Adrenal gland (tissue), 19 donors: ENCODE measurements at regions of chr22 and their contacts with region 1.

Region 1: DNA sequence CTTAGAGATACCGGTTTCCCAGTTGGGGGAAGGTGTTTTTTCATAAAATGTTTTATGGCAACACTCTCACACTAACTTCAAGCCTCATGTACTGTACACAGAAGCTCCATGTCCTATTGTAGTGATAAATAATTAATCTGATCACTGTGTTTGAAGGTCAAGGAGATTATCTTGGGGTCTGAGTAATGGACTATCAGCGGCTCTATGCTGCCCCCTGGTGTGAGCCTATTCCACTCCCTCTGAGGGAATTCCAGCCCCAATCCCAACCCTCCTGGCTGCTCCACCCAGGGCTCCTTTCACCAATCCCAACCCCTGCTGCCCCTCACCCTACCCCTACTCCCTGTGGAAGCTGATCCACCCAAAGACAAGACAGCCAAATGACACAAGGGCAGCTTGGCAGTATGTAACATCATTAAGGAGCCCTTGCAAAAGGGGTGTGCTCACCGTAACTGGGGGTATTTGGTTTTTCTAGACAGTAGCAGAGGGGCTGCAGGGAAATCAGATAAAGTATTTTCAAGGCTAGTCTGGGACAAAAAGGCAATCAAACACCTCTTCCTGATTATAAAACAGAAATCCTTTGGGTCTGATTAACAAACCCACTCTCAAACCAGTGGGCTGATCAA is 22.3 kb downstream of the HPS4 start:
- DNase-seq: peak; percentile 57 to 82 (median 77)
- H3K4me3 ChIP-seq: no peak overlapping the region
- H3K27ac ChIP-seq: no peak overlapping the region
- H3K4me1 ChIP-seq: peaks cover 6 to 33% of the 10 kb centered on the region in 2 donors
- H3K27me3 ChIP-seq: no peaks in the 10 kb centered on the region
- CTCF ChIP-seq: peak; percentile 59 to 79 (median 72)
- POLR2A ChIP-seq: no peak

Region 2: GRCh38 chr22:26364066-26365015 is 97.0 kb before region 1 on chr22:
- intact Hi-C with region 1: loop called in 1 of 2 experiments (anchors 2 kb)
- DNase-seq: peak; percentile 58 to 92 (median 79)
- H3K4me3 ChIP-seq: no peak overlapping the region
- H3K27ac ChIP-seq: no peak overlapping the region
- H3K4me1 ChIP-seq: no peaks in the 10 kb centered on the region
- H3K27me3 ChIP-seq: peaks cover 7% of the 10 kb centered on the region
- CTCF ChIP-seq: peak; percentile 47 to 70 (median 58)
- POLR2A ChIP-seq: no peak

Region 3: GRCh38 chr22:26398741-26399153 is 62.6 kb before region 1 on chr22:
- intact Hi-C with region 1: loop called (anchors 5 to 10 kb)
- DNase-seq: peak; percentile 53 to 84 (median 72)
- H3K4me3 ChIP-seq: no peak overlapping the region
- H3K27ac ChIP-seq: no peak overlapping the region
- H3K4me1 ChIP-seq: no peaks in the 10 kb centered on the region
- H3K27me3 ChIP-seq: no peaks in the 10 kb centered on the region
- CTCF ChIP-seq: peak; percentile 33 to 76 (median 72)
- POLR2A ChIP-seq: no peak

Region 4: DNA sequence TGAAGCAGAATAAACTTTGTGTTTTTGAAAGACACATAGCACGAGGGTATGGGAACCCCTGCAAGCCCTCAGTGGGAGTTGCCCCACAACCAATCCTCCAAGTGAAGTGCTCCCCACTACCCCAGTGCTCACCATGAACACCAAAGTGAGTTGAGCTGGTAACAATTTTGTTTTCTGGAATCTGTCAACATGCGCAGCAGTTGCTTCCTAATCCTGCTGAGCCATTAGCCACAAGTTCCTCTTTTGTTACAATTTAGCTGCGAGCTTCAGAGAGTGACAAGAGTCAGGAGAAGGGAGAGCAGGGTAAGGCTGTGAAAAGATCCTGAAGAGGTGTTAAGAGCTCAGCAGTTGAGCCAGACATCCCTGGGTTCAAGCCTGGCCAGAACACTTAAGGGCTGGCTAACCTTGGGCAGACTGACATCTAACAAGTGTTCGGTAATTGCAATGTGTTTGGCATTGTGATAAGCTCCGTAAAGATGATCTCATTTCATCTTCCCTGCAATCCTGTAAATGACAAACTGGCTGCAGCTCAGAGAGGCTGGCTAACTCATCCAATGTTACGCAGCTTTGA is 56.4 kb before region 1 on chr22:
- intact Hi-C with region 1: loop called in 1 of 2 experiments (anchors 5 kb)
- DNase-seq: no peak
- H3K4me3 ChIP-seq: no peak overlapping the region
- H3K27ac ChIP-seq: no peak overlapping the region
- H3K4me1 ChIP-seq: peaks cover 0 to 4% of the 10 kb centered on the region in 2 donors
- H3K27me3 ChIP-seq: no peaks in the 10 kb centered on the region
- CTCF ChIP-seq: no peak
- POLR2A ChIP-seq: no peak

Region 5: DNA sequence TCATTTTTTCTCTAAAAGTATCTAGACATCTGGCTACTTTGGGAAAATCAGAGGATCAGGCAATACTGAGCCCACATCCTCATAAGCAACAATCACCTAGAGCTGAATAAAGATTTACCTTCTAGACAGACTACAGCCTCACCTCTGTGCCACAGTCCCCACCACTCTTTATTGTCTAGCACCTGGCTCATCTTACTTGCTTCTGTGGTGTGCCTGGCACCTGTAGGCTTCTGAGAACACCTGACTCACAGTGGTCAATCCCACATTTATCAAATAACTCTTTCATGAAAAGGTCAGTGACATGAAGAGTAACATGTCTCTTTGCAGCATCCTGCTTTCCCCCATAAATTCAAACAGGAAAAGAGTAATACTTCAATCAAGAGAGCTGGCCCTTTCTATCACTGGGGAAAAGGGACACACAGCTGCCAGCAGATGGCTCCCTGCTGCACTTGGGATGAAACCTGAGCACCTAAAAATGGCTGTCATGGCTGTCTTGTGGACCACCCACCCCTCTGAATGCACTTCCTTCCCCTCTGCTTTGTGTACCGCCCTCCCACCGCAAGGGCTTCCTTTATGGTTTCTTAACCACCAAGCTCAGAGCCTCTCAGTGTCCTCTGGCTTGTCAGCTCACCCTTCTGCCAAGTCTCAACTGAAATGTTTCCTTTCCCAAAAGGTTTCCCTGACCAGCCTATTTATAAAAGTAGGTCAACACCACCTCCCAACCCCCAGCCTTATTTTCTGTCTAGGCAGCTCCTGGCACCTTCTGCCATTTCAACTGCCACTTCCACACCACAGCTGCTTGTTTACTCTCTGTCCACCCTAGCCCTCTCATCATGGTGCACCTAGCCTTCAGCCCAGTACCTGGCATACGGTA is 41.6 kb after region 1 on chr22:
- intact Hi-C with region 1: no loop called
- DNase-seq: peak; percentile 30 to 66 (median 43)
- H3K4me3 ChIP-seq: no peak overlapping the region
- H3K27ac ChIP-seq: no peak overlapping the region
- H3K4me1 ChIP-seq: no peaks in the 10 kb centered on the region
- H3K27me3 ChIP-seq: no peaks in the 10 kb centered on the region
- CTCF ChIP-seq: peak; percentile 15 to 57 (median 47)
- POLR2A ChIP-seq: no peak

Region 6: GRCh38 chr22:26848244-26848920 is 387.1 kb after region 1 on chr22:
- intact Hi-C with region 1: no loop called
- DNase-seq: peak in 1 of 7 donors; percentile 15
- H3K4me3 ChIP-seq: no peak overlapping the region
- H3K27ac ChIP-seq: no peak overlapping the region
- H3K4me1 ChIP-seq: no peaks in the 10 kb centered on the region
- H3K27me3 ChIP-seq: no peaks in the 10 kb centered on the region
- CTCF ChIP-seq: no peak
- POLR2A ChIP-seq: no peak